ENCODE measurements at regions of chr3 and their contacts with region 1.

Region 1: GRCh38 chr3:159804726-159805410 is 183.8 kb upstream of the IL12A start:
- DNase-seq: peak; percentile 74
- H3K4me3 ChIP-seq: no peak overlapping the region
- H3K27ac ChIP-seq: no peak overlapping the region
- H3K27me3 ChIP-seq: no peaks in the 10 kb centered on the region
- CTCF ChIP-seq: peak; percentile 99

Region 2: GRCh38 chr3:159322322-159322939 is 482.4 kb before region 1 on chr3:
- CTCF ChIA-PET with region 1: interaction called, 33 read pairs
- POLR2A ChIA-PET with region 1: no interaction called
- DNase-seq: no peak
- H3K4me3 ChIP-seq: no peak overlapping the region
- H3K27ac ChIP-seq: no peak overlapping the region
- H3K27me3 ChIP-seq: peaks cover 2% of the 10 kb centered on the region
- CTCF ChIP-seq: peak; percentile 82

Region 3: GRCh38 chr3:159609625-159610024 is 195.2 kb before region 1 on chr3:
- CTCF ChIA-PET with region 1: interaction called, 57 read pairs
- POLR2A ChIA-PET with region 1: no interaction called
- DNase-seq: no peak
- H3K4me3 ChIP-seq: no peak overlapping the region
- H3K27ac ChIP-seq: no peak overlapping the region
- H3K27me3 ChIP-seq: no peaks in the 10 kb centered on the region
- CTCF ChIP-seq: no peak

Region 4: DNA sequence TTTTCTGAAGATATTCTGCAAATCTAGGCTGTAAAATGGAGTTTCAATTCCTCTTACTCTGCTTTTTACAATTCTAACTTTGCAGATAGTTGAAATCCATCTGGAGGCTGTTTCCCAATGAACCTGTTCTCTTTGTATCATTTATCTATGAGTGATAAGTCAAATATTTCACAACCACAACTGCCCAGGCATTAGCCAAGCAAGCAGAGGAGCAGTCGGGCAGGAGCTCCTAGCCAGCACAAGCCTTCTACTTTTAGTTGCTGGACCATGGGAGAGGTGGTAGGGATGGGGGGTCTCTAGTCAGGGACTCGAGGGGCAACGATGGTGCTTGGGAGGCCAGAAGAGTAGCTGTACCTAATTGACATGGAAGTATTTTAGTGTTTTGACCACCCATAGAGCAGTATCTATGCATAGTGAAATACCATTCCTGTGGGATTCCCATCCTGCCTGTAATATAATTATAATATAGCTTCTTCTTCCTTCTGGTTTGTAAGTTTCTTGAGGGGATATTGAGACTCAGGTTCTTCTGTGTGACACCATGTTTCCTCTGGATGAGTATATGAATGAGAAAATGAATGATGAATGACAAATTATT is 169.7 kb before region 1 on chr3:
- CTCF ChIA-PET with region 1: interaction called, 23 read pairs
- POLR2A ChIA-PET with region 1: no interaction called
- DNase-seq: no peak
- H3K4me3 ChIP-seq: no peak overlapping the region
- H3K27ac ChIP-seq: no peak overlapping the region
- H3K27me3 ChIP-seq: no peaks in the 10 kb centered on the region
- CTCF ChIP-seq: no peak

Region 5: DNA sequence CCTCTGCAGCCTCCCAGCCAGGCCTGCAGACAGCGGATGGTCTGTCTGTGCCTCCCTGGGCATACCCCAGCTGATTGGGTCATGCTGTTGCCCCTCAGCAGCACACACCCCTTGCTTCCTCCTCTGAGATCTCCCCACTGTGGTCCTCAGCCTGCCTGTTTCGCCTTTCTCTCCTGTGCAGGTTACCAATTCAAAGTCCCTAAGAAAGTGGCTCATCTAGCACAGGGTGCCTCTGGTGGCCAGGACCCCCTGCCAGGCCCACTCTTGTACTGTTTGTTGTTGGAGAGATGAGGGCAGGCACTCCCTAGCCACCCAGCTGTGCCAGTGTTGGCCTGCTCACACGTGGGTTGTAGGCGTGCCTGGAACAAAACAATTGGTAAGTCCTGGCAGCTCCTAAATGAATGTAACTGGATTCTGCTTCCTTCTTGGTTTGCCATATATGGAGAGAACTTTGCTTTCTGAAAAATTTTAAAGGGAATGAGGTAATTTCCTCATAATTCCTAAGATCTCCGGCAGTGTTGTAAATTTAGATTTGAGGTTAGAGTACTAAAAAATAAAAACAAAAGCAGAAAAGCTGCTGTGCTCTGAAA is 29.4 kb before region 1 on chr3:
- CTCF ChIA-PET with region 1: interaction called, 32 read pairs
- POLR2A ChIA-PET with region 1: interaction called, 3 read pairs
- DNase-seq: peak; percentile 71
- H3K4me3 ChIP-seq: no peak overlapping the region
- H3K27ac ChIP-seq: peak overlapping the region; percentile 85
- H3K27me3 ChIP-seq: no peaks in the 10 kb centered on the region
- CTCF ChIP-seq: no peak

Region 6: GRCh38 chr3:159839561-159840379 is 34.9 kb after region 1 on chr3:
- CTCF ChIA-PET with region 1: interaction called, 13 read pairs
- POLR2A ChIA-PET with region 1: no interaction called
- DNase-seq: no peak
- H3K4me3 ChIP-seq: no peak within 1 kb of the TSS
- H3K27ac ChIP-seq: no peak within 1 kb of the TSS
- H3K27me3 ChIP-seq: no peaks in the 10 kb centered on the region
- CTCF ChIP-seq: no peak